Activated CD4-positive, alpha-beta T cell treated with anti-CD3 and anti-CD28 coated beads, Interleukin-2, amount 10 ng/mL, durations not matched to agents 24 days and 14 days (primary cell): ENCODE measurements at regions of chr4 and their contacts with region 1.

Region 1: DNA sequence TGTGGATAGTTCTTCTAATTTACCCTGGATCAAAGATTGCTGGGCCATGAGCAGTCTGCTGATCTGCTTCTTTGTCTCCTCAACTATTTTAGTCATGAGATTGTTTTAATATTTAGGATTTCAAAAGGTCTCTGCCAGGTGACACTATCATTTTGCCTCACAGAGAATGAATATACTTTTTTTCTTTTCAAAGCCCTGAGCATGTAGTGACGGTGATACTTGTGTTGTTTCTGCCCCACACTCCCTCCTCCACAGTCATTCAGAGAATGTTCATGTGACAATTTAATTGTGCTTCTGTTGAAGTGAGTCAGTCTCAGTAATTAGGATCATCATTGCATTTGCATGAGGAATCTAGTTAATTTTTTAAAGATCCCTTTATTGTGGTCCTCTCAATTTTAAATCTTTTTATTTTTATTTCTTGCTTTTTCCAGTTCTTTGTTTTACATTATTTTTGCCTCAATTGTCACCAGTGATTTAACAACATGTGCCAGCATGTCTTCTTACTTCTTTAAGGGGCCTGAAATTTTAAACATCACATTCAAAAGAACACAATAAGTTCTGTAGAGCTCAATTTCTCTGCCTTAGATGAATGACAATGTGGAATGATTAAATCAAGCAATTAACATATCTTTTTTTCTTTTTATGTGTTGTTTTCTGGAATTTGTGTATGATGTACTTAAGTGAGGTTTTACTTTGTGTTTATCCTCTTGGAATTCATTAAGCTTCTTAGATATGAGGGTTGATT is 12.3 kb downstream of the MMRN1 start:
- DNase-seq: no peak
- H3K4me3 Mint-ChIP-seq: no peak overlapping the region
- H3K27ac Mint-ChIP-seq: no peak overlapping the region
- H3K4me1 Mint-ChIP-seq: no peaks in the 10 kb centered on the region
- H3K27me3 Mint-ChIP-seq: peaks cover 28% of the 10 kb centered on the region

Region 2: GRCh38 chr4:89482248-89482647 is 424.7 kb before region 1 on chr4:
- intact Hi-C with region 1: loop called (anchors 5 kb)
- DNase-seq: no peak
- H3K4me3 Mint-ChIP-seq: no peak overlapping the region
- H3K27ac Mint-ChIP-seq: no peak overlapping the region
- H3K4me1 Mint-ChIP-seq: no peaks in the 10 kb centered on the region
- H3K27me3 Mint-ChIP-seq: peaks cover 3% of the 10 kb centered on the region

Region 3: DNA sequence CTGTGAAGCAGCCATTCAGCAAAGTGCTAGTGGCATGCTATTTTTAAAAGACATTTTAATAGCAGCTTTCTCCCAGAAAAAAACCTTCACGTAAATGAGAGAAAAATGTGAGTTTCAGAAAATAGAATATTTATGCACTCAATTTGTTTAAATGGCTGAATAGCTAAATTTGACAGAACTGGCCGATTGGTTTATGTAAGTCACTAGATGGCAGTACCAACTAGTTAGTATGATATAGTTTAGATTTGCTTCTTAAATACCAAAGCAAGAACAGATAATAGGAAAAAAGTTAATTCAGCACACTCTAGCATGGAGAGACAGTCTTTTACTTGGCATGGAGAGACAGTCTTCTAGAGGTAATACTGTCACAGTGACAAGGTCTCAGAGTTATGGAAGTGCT is 320.1 kb before region 1 on chr4:
- intact Hi-C with region 1: loop called (anchors 5 kb)
- DNase-seq: no peak
- H3K4me3 Mint-ChIP-seq: no peak overlapping the region
- H3K27ac Mint-ChIP-seq: no peak overlapping the region
- H3K4me1 Mint-ChIP-seq: no peaks in the 10 kb centered on the region
- H3K27me3 Mint-ChIP-seq: peaks cover 17% of the 10 kb centered on the region

Region 4: GRCh38 chr4:89657931-89658700 is 248.8 kb before region 1 on chr4:
- intact Hi-C with region 1: loop called (anchors 5 kb)
- DNase-seq: no peak
- H3K4me3 Mint-ChIP-seq: no peak overlapping the region
- H3K27ac Mint-ChIP-seq: no peak overlapping the region
- H3K4me1 Mint-ChIP-seq: peaks cover 2% of the 10 kb centered on the region
- H3K27me3 Mint-ChIP-seq: peaks cover 23% of the 10 kb centered on the region